Endothelial cell of umbilical vein (primary cell): ENCODE measurements at regions of chr14 and their contacts with region 1.

Region 1: DNA sequence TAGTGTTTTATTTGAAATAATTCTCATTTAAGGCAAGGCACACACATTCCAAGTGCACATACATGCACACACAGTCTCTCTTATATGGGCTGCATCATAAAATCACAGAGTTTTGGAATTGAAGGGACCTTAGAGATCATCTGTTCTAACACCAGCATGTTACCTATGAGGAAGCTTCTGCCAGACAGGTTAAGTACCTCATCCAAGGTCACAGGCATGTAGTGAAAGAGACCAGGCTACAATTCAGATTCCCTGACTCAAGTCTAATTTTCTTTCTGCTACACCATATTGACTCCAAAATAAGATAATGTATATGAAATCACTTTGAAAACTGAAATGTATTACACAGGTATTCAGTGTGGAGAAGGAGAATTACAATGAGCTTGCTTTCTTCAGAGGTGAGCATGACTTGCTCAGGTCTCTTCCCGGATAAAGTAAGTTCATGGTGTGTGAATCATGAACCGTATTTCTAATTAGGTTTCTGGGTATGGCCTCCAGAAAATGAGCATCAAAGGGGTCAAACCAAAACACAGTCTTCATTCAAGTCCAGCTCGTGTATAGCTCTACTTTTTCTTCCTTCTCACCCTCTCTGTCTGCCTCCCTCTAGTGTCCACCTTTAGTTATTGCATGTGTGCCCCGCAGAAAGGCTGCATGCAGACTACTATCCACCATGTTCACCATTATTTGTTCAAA is 411.9 kb downstream of the FUT8 start:
- DNase-seq: peak; percentile 75
- H3K4me3 ChIP-seq: no peak overlapping the region
- H3K27ac ChIP-seq: no peak overlapping the region
- H3K4me1 ChIP-seq: no peaks in the 10 kb centered on the region
- H3K27me3 ChIP-seq: peaks cover 15 to 18% of the 10 kb centered on the region in 2 experiments
- CTCF ChIP-seq: peak; percentile 83 to 86
- POLR2A ChIP-seq: no peak

Region 2: DNA sequence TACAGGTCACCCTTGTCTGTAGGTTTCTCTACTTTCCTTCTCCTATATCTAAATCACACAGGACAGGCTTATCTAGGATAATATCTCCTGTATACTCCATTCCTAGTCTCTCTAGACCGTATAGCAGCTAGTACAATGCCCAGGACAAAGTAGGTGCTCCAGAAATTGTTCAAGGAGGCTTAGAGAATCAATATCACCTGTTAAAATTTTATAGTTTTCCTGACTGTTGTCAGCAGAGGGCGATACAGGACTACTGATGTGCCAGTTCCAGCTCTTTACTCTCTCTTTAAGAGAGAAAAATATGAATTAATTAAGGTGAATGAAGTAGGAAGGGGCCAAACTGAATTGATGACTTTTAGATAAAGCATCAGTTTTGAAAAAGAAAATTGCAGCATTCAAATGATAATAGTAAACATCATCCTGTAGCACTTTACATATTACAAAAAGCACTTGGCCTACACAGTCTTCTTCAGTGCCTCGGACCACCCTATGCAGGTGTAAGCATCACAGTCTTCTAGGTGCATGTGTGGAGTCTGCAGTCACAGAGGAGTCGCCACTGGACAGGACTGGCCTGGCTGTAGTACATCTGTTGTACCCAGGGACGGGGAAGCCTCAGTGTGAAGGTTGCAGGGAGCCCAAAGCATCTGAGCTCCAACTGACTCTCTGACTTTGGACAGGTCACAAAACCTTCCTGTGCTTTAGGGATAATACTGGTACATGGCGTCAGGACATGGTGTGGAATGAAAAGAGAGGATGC is 660.2 kb before region 1 on chr14:
- CTCF ChIA-PET with region 1: interaction called, 286 read pairs
- POLR2A ChIA-PET with region 1: no interaction called
- dilution Hi-C with region 1: no loop called
- intact Hi-C with region 1: loop called (anchors 1 kb)
- DNase-seq: peak; percentile 58
- H3K4me3 ChIP-seq: no peak overlapping the region
- H3K27ac ChIP-seq: no peak overlapping the region
- H3K4me1 ChIP-seq: no peaks in the 10 kb centered on the region
- H3K27me3 ChIP-seq: no peaks in the 10 kb centered on the region
- CTCF ChIP-seq: peak; percentile 36 to 41
- POLR2A ChIP-seq: no peak

Region 3: DNA sequence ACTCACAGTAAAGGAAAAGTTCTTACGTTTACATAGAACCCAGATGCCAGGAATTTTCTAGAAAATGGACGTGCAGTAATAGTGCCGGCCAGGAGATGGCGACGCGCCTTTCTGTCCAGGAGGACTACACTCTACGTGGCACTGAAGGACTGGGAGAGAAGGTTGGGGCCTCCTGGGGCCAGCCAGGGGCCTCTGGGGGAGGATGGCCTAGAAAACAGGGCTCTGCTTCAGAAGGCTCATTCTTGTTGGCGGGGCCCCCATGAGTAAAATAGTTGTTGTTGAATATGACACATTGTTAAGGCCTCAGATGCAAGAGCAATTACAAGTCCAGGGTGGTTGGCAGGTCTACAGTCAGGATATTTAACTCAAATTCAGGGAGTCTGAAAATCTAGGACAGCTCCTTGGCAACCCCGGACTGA is 602.0 kb before region 1 on chr14:
- CTCF ChIA-PET with region 1: interaction called, 8 read pairs
- POLR2A ChIA-PET with region 1: no interaction called
- dilution Hi-C with region 1: no loop called
- intact Hi-C with region 1: loop called (anchors 1 kb)
- DNase-seq: peak; percentile 80
- H3K4me3 ChIP-seq: no peak overlapping the region
- H3K27ac ChIP-seq: no peak overlapping the region
- H3K4me1 ChIP-seq: peaks cover 4% of the 10 kb centered on the region
- H3K27me3 ChIP-seq: no peaks in the 10 kb centered on the region
- CTCF ChIP-seq: peak; percentile 82
- POLR2A ChIP-seq: no peak

Region 4: DNA sequence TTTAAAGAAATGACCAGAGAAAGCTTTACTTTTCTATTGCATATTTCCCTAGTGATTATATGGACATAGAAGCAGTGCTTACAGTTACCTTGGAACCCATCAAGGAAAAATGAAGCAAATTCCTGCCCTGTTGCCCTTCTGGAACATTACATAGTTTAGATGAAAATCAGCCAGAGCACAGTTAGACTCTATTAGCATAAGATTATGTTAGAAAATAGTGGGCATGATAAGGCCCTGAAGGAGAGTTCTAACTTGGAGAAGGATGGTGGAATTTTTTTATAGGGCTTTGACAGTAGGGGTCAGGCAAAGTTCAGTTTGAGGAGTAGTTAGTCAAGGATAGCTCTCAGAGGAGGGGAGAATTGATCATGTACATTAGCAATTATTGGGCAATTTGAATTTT is 337.6 kb before region 1 on chr14:
- CTCF ChIA-PET with region 1: interaction called, 18 read pairs
- POLR2A ChIA-PET with region 1: no interaction called
- dilution Hi-C with region 1: no loop called
- intact Hi-C with region 1: no loop called
- DNase-seq: no peak
- H3K4me3 ChIP-seq: no peak overlapping the region
- H3K27ac ChIP-seq: no peak overlapping the region
- H3K4me1 ChIP-seq: no peaks in the 10 kb centered on the region
- H3K27me3 ChIP-seq: no peaks in the 10 kb centered on the region
- CTCF ChIP-seq: no peak
- POLR2A ChIP-seq: no peak

Region 5: GRCh38 chr14:65794674-65795279 is 29.7 kb before region 1 on chr14:
- CTCF ChIA-PET with region 1: interaction called, 14 read pairs
- POLR2A ChIA-PET with region 1: no interaction called
- dilution Hi-C with region 1: no loop called
- intact Hi-C with region 1: no loop called
- DNase-seq: no peak
- H3K4me3 ChIP-seq: no peak overlapping the region
- H3K27ac ChIP-seq: no peak overlapping the region
- H3K4me1 ChIP-seq: no peaks in the 10 kb centered on the region
- H3K27me3 ChIP-seq: no peaks in the 10 kb centered on the region
- CTCF ChIP-seq: no peak
- POLR2A ChIP-seq: no peak

Region 6: GRCh38 chr14:65847075-65847847 is 22.8 kb after region 1 on chr14:
- CTCF ChIA-PET with region 1: interaction called, 19 read pairs
- POLR2A ChIA-PET with region 1: no interaction called
- dilution Hi-C with region 1: no loop called
- intact Hi-C with region 1: no loop called
- DNase-seq: no peak
- H3K4me3 ChIP-seq: no peak overlapping the region
- H3K27ac ChIP-seq: no peak overlapping the region
- H3K4me1 ChIP-seq: no peaks in the 10 kb centered on the region
- H3K27me3 ChIP-seq: no peaks in the 10 kb centered on the region
- CTCF ChIP-seq: no peak
- POLR2A ChIP-seq: no peak